ENCODE measurements at regions of chr4 and their contacts with region 1.

Region 1: DNA sequence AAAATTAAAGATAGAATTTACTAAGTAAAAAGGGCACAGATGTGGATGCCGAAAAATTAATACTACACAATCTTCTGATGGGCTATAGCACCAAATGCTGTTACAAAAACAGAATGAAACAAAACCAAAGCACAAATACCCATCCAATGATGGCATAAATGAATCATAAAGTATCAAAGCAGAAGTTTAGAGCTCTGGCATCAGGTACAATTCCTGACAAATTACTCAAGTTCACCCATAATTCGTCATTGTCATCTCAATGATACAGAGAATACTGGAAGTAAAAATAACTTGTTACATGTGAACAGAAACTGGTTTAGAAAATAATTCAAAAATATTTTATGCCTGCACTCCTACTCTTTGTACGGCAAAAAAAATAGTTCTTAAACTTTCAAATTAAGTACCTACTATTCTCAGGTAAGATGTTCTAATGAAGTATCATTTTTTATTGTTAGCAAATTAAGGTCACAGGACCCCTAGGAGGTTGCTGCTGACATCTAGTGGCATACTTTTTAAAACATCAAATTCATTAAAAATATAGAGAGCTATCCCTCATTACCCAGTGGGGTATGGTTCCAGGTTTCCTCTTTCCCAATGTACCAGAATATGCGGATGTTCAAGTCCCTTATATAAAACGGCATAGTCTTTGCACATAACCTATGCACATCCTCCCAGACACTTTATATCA is 126.1 kb downstream of the INPP4B start:
- DNase-seq: no peak
- ATAC-seq: no peak
- H3K4me3 ChIP-seq: no peak overlapping the region
- H3K27ac ChIP-seq: no peak overlapping the region
- H3K4me1 ChIP-seq: peaks cover 0 to 8% (median 0%) of the 10 kb centered on the region in 12 donors
- H3K27me3 ChIP-seq: no peaks in the 10 kb centered on the region
- CTCF ChIP-seq: peak; percentile 24 to 66 (median 48)
- POLR2A ChIP-seq: no peak

Region 2: GRCh38 chr4:142141231-142141630 is 578.8 kb before region 1 on chr4:
- intact Hi-C with region 1: no loop called
- DNase-seq: no peak
- ATAC-seq: no peak
- H3K4me3 ChIP-seq: no peak overlapping the region
- H3K27ac ChIP-seq: no peak overlapping the region
- H3K4me1 ChIP-seq: no peaks in the 10 kb centered on the region
- H3K27me3 ChIP-seq: no peaks in the 10 kb centered on the region
- CTCF ChIP-seq: no peak
- POLR2A ChIP-seq: no peak

Region 3: DNA sequence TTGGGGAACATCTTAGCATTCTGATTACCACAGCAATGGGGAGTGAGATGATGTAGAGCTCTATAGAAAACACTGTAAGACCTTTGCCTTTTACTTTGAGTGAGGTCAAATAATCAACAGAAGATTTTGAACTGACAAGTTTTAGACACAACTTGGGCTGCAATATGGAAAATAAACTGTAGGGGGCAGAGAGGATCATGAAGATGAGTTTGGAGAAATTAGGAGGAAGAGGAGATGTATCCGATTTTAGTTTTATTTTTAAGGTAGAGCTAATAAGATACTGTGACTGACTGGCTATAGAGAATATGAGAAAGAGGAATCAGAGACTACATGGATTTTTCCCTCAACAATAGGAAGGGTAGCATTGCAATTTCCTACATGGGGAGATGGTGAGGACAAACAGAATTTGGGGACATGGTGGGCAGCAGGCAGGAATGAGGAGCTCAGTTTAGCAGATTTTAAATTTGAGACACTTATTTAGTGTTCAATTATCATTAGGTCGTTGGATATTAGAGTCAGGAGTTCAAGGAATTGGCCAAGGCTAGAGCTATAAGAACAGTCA is 437.0 kb before region 1 on chr4:
- intact Hi-C with region 1: loop called in 1 of 10 experiments (anchors 10 kb)
- DNase-seq: no peak
- ATAC-seq: no peak
- H3K4me3 ChIP-seq: no peak overlapping the region
- H3K27ac ChIP-seq: no peak overlapping the region
- H3K4me1 ChIP-seq: peaks cover 0 to 5% (median 0%) of the 10 kb centered on the region in 12 donors
- H3K27me3 ChIP-seq: no peaks in the 10 kb centered on the region
- CTCF ChIP-seq: peak; percentile 39 to 60 (median 48)
- POLR2A ChIP-seq: no peak

Region 4: DNA sequence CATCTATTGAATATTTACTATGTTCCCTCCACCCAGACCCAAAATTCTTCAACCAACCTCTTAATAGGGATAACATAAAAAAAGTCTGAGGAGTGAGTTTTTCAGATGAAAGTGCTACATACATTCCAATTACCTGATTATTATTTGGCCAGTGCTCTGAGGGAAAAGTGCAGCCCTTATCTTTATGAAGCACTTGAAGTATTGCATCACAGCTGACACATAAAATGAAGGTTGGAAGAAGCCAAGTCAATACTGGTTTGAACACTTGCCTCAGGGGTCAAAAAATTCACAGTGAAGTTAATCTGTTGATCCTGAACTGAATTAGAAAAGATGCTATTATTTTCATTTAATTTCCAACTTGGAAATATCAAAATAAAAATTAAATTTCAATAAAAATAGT is 372.8 kb before region 1 on chr4:
- intact Hi-C with region 1: loop called in 8 of 10 experiments (anchors 5 to 10 kb)
- DNase-seq: no peak
- ATAC-seq: peak in 3 of 4 donors; percentile 68 to 82 (median 81)
- H3K4me3 ChIP-seq: no peak overlapping the region
- H3K27ac ChIP-seq: peak overlapping the region in 4 of 12 donors; percentile 27 to 70 (median 46)
- H3K4me1 ChIP-seq: peaks cover 0 to 64% (median 35%) of the 10 kb centered on the region in 12 donors
- H3K27me3 ChIP-seq: no peaks in the 10 kb centered on the region
- CTCF ChIP-seq: no peak
- POLR2A ChIP-seq: no peak

Region 5: DNA sequence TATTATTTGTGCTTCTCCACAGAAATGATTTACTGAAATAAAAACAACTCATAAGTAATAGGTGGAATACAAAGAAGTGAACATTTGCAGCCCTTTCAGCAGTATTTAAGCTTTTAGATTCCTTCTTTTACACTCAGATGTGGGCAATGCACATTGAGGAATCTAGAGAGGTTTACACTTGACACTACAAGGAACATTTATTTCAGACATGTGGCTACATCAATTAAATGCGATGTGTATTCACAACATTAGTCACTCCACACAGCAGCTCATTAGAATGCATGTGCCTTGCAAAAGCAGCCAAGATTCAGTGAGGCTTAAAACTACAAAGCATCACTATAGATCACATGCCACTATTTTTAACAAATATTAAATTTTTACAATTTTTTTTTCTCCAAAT is 354.6 kb before region 1 on chr4:
- intact Hi-C with region 1: loop called in 1 of 10 experiments (anchors 10 kb)
- DNase-seq: no peak
- ATAC-seq: no peak
- H3K4me3 ChIP-seq: no peak overlapping the region
- H3K27ac ChIP-seq: no peak overlapping the region
- H3K4me1 ChIP-seq: peaks cover 0 to 25% (median 10%) of the 10 kb centered on the region in 12 donors
- H3K27me3 ChIP-seq: no peaks in the 10 kb centered on the region
- CTCF ChIP-seq: no peak
- POLR2A ChIP-seq: no peak